Head of caudate nucleus (tissue), 42 donors: ENCODE measurements at regions of chr19 and their contacts with region 1.

Region 1: GRCh38 chr19:13861732-13862531 is 15.0 kb upstream of the NANOS3 start:
- DNase-seq: peak; percentile 84 to 97 (median 92)

Region 2: DNA sequence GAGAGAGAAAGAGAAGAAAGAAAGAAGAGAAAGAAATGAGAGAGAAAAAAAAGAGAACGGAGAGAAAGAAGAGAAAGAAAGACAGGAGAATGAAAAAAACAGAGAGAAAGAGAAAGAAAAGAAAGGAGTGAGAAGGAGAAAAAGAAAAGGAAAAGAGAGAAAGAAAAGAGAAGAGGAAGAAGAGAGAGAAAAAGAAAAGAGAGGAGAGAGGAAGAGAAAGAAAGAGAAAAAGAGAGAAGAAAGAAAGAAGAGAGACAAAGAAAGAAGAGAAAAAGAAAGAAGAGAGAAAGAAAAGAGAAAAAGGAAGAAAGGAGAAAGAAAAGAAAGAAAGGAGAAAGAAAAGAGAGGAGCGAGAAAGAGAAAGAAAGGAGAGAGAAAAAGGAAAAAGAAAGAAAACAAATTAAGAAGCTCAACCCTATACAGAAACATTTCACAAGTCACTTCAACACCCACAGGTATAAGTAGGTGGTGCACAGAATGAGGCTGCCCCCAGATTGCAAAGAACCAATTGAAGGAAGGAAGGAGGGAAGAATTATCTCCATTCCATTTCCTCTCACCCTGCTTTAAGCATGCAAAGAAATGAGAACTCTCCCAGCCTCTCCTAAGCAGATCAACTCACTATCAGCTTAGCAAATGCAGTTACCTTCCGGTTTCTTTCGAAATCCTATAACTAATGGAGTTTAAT is 256.9 kb before region 1 on chr19:
- intact Hi-C with region 1: loop called (anchors 10 kb)
- DNase-seq: peak in 16 of 42 donors; percentile 21 to 73 (median 43)

Region 3: DNA sequence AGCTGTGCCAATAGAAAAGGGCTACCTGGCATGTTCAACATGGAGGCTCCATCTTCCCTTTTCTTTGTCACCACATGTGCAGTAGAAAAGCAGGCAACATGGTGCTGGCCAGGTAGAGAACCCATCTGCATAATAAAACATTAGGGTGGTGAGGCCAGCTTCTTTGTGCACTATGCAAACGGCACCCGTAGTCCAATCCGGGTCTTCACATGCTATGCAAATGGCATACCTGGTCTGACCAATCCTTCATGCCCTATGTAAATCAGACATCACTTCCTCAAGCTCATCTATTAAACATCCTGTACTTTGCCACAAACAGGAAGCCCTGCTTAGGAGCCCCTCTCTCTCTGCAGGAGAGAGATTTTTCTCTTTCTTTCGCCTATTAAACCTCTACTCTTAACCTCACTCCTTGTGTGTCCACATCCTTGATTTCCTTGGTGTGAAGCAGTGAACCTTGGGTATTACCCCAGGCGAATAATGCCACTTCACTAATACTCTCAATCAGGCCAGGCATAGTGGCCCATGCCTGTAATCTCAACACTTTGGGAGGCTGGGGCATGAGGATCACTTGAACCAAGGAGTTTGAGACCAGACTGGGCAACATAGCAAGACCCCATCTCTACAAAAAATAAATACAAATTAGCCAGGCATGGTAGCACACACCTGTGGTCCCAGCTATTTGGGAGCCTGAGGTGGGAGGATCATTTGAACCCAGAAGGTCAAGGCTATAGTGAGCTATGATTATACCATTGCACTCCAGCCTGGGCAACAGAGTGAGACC is 208.9 kb before region 1 on chr19:
- intact Hi-C with region 1: no loop called
- DNase-seq: no peak

Region 4: DNA sequence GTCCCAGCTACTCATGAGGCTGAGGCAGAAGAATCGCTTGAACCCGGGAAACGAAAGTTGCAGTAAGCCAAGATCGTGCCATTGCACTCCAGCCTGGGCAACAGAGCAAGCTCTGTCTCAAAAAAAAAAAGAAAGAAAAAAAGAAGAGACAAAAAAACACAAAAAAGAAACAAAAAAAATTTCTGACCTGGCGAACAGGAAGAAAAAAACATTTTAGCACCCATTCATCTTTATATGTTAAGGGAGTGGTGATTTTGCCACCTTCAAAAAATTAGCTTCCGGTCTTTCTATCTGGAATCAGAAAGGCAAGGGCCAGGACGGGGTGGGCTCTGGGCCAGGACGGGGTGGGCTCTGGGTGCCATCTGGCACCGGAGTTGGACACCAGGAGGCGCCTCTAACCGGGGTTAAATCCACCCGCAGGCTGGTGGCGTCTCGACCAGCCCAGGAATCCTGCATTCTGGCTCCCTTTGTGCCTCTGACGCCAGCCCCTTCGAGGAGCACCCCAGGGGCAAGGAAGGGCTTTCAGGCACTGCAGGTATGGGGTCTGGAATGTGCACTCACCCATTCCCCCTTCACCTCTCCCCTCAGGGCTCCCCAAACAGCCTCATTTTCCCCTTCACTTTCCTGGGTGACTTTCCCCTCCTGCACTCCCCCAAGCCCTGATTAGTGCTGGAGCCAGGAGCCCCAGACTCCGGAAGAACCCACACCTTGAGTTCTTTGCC is 77.0 kb before region 1 on chr19:
- intact Hi-C with region 1: loop called (anchors 2 kb)
- DNase-seq: peak in 40 of 42 donors; percentile 42 to 88 (median 66)

Region 5: GRCh38 chr19:13794757-13795589 is 67.0 kb before region 1 on chr19 and contains the start of gene ZSWIM4:
- intact Hi-C with region 1: loop called (anchors 5 kb)
- DNase-seq: peak; percentile 95 to 99 (median 98)